ENCODE measurements at regions of chr6 and their contacts with region 1.

Region 1: GRCh38 chr6:25085756-25086155 is 150.0 kb upstream of the RIPOR2 start:
- DNase-seq: peak in 1 of 2 donors; percentile 33
- ATAC-seq: peak; percentile 70 to 92 (median 86)
- H3K4me3 ChIP-seq: no peak overlapping the region
- H3K27ac ChIP-seq: peak overlapping the region in 9 of 10 donors; percentile 1 to 77 (median 66)
- H3K4me1 ChIP-seq: peaks cover 0 to 65% (median 36%) of the 10 kb centered on the region in 9 donors
- H3K27me3 ChIP-seq: no peaks in the 10 kb centered on the region
- CTCF ChIP-seq: no peak

Region 2: GRCh38 chr6:25122001-25122400 is 36.2 kb after region 1 on chr6:
- intact Hi-C with region 1: loop called in 1 of 10 experiments (anchors 5 kb)
- DNase-seq: peak; percentile 31 to 42
- ATAC-seq: peak; percentile 61 to 91 (median 83)
- H3K4me3 ChIP-seq: no peak overlapping the region
- H3K27ac ChIP-seq: peak overlapping the region in 9 of 10 donors; percentile 36 to 78 (median 72)
- H3K4me1 ChIP-seq: peaks cover 0 to 60% (median 21%) of the 10 kb centered on the region in 9 donors
- H3K27me3 ChIP-seq: no peaks in the 10 kb centered on the region
- CTCF ChIP-seq: no peak

Region 3: DNA sequence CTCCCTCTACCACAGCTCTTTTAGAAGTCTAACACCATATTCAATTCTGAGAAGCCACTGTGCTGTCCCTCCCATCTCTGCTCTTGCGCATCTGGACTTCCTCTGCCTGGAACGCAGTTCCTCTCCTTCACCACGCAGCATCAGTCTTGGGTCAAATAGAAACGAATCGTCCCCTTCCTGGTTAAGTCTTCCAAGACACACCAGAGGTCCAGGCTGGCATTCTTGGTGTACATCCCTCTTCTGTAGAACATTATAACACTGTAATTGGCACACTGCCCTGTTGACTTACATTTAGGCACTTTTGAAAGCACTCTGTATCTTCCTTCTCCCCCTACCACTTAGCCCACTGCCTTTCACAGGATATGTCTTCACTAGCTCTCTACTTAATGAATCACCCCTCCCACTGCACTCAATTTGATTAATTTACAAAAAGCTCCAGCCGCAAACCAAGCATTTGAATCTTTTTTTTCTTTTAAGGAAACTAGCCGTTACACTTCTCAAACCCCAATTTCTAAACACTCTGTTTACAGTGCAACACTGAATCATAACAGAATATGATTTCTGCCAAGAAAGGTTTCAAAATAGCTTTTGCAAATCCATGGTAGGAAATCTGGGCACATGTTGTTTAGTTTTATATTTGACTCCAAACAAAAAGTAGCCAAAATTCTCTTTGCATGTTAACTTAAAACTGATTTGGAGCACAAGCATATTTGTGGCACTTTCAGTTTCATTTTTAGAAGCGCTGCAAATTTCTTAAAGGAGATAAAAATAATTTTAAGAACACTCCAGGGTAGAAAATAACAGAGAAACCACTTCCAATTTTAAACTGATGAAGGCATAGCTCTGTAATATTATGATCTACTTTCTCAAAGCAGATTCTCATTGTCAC is 52.7 kb after region 1 on chr6:
- intact Hi-C with region 1: loop called in 4 of 10 experiments (anchors 5 kb)
- DNase-seq: peak; percentile 29 to 76
- ATAC-seq: peak; percentile 80 to 93 (median 92)
- H3K4me3 ChIP-seq: peak overlapping the region; percentile 31 to 57 (median 49)
- H3K27ac ChIP-seq: peak overlapping the region; percentile 73 to 93 (median 88)
- H3K4me1 ChIP-seq: peaks cover 0 to 34% (median 20%) of the 10 kb centered on the region in 9 donors
- H3K27me3 ChIP-seq: no peaks in the 10 kb centered on the region
- CTCF ChIP-seq: peak in 5 of 9 donors; percentile 15 to 40 (median 25)

Region 4: GRCh38 chr6:25179051-25179778 is 93.5 kb after region 1 on chr6:
- intact Hi-C with region 1: loop called in 2 of 10 experiments (anchors 2 to 10 kb)
- DNase-seq: no peak
- ATAC-seq: peak; percentile 55 to 90 (median 80)
- H3K4me3 ChIP-seq: no peak overlapping the region
- H3K27ac ChIP-seq: peak overlapping the region; percentile 30 to 82 (median 64)
- H3K4me1 ChIP-seq: peaks cover 0 to 69% (median 14%) of the 10 kb centered on the region in 9 donors
- H3K27me3 ChIP-seq: no peaks in the 10 kb centered on the region
- CTCF ChIP-seq: no peak

Region 5: DNA sequence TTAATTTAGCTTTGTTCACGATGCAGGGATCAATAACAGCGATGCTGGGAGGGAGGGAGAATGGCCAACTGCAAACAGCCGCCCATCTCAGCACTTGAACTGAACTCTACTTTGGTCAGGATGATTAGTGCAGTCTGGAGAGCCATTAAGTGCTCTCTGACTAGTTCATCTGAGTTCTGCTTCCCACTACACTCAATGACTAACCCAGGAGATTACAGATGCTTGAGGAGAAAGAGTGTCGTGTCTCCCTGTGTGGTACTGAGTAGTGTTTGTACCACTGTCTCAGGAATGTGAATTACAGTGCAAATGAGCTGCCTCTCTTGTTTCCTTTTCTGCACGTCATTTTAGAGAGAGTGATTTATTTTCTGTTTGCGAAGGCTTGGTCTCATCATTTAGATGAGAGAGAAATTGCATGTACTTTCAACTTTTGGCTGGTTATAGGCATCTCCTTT is 216.9 kb after region 1 on chr6:
- intact Hi-C with region 1: no loop called
- DNase-seq: no peak
- ATAC-seq: peak; percentile 43 to 94 (median 63)
- H3K4me3 ChIP-seq: no peak overlapping the region
- H3K27ac ChIP-seq: peak overlapping the region in 5 of 10 donors; percentile 13 to 41 (median 29)
- H3K4me1 ChIP-seq: peaks cover 3 to 45% (median 25%) of the 10 kb centered on the region in 9 donors
- H3K27me3 ChIP-seq: no peaks in the 10 kb centered on the region
- CTCF ChIP-seq: no peak

Measured in heart right ventricle (tissue), 16 donors.